ENCODE measurements at regions of chr14 and their contacts with region 1.

Region 1: DNA sequence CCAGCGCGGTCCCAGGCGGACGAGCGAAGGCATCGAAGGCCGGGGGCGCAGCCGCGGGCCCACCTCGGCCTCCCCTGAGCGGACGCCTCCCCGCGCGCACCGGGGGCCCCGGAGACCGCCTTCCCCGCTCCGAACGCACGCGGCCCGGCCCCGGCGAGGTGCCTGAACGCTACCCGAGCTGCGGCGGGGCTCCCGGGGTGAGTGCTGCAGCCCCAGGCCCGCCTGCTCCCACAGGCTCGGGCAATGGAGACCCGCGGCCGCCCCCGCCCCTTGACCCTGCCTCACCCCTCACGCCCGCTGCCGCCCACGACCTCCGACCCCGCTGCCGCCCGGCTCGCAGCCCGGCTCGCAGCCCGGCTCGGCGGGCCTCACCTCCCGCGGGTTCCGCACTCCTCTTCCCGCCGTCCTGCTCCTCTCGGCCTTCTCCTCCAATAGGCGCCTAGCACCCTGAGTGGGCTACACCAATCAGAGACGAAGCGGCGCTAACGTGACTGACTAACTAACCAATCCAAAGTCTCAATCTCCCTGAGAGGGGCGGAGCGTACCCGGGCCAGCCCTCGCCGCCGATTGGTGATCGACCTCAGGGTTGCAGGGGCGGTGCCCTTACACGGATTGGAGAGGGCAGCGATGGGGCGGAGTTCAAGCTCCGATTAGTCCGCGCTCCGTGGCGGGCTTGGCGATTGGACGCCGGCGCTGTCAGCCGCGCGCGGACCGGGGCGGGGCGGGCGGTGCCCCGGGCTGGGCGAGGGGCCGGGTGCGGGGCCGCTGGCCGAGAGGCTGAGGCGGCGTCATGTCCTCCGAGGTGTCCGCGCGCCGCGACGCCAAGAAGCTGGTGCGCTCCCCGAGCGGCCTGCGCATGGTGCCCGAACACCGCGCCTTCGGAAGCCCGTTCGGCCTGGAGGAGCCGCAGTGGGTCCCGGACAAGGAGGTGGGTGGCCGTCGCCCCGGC is at the starts of genes XRCC3 and ZFYVE21:
- DNase-seq: peak; percentile 100
- H3K4me3 Mint-ChIP-seq: peak within 1 kb of the TSS; percentile 86
- H3K27ac Mint-ChIP-seq: peak within 1 kb of the TSS; percentile 85
- H3K4me1 Mint-ChIP-seq: peaks cover 60% of the 10 kb centered on the region
- H3K27me3 Mint-ChIP-seq: peaks cover 2% of the 10 kb centered on the region
- total RNA-seq, gene XRCC3: 41.9 to 48.5 TPM
- total RNA-seq, gene ZFYVE21: 14.9 to 15.9 TPM

Region 2: GRCh38 chr14:103628684-103629502 is 86.4 kb before region 1 on chr14 and contains the start of gene KLC1:
- CTCF ChIA-PET with region 1: no interaction called
- POLR2A ChIA-PET with region 1: interaction called, 5 read pairs
- intact Hi-C with region 1: loop called (anchors 1 kb)
- DNase-seq: peak; percentile 88
- H3K4me3 Mint-ChIP-seq: peak within 1 kb of the TSS; percentile 84
- H3K27ac Mint-ChIP-seq: peak within 1 kb of the TSS; percentile 83
- H3K4me1 Mint-ChIP-seq: peaks cover 36% of the 10 kb centered on the region
- H3K27me3 Mint-ChIP-seq: no peaks in the 10 kb centered on the region
- total RNA-seq, gene KLC1: 119 to 130 TPM

Region 3: DNA sequence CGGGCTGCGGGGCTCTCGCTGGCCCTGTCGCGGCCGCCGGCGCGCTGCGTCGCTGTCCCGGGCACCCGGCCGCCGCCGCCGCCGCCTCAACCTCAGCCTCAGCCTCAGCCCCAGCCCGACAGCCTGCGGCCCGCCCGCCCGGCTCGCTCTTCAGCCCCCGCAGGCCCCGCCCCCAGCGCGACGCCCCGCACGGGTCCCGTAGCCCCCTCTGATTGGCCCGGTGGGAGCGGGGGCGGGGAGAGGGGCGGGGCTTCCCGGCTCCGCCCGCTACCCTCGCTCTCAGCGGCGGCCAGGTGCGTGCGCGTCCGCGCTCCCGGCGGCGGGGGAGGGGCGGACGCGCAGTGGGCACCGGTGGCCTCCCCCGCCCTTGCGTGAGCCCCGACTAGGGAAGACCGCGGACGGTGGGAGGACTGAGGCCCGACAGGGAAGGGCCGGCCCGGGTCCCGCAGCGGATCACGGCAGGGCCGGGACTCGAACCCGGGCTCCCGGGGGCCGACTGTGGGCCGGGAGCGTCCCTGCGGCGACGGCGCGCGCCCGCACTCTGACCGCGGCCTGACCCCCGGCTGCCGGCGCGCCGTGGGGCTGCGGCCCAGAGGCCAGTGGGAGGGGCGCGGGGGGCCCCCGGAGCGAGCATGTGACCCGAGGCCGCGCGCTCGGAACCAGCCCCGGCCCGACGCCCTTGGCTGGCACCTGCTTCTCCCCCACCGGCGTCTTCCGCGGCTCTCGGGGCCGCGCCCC is 132.3 kb after region 1 on chr14 and contains the start of gene PPP1R13B:
- CTCF ChIA-PET with region 1: no interaction called
- POLR2A ChIA-PET with region 1: no interaction called
- intact Hi-C with region 1: loop called (anchors 1 kb)
- DNase-seq: peak; percentile 94
- H3K4me3 Mint-ChIP-seq: peak within 1 kb of the TSS; percentile 90
- H3K27ac Mint-ChIP-seq: peak within 1 kb of the TSS; percentile 61
- H3K4me1 Mint-ChIP-seq: peaks cover 12% of the 10 kb centered on the region
- H3K27me3 Mint-ChIP-seq: no peaks in the 10 kb centered on the region
- total RNA-seq, gene PPP1R13B: 13.5 to 14.8 TPM